Esophagus squamous epithelium (tissue), 5 donors: ENCODE measurements at regions of chr1 and their contacts with region 1.

Region 1: DNA sequence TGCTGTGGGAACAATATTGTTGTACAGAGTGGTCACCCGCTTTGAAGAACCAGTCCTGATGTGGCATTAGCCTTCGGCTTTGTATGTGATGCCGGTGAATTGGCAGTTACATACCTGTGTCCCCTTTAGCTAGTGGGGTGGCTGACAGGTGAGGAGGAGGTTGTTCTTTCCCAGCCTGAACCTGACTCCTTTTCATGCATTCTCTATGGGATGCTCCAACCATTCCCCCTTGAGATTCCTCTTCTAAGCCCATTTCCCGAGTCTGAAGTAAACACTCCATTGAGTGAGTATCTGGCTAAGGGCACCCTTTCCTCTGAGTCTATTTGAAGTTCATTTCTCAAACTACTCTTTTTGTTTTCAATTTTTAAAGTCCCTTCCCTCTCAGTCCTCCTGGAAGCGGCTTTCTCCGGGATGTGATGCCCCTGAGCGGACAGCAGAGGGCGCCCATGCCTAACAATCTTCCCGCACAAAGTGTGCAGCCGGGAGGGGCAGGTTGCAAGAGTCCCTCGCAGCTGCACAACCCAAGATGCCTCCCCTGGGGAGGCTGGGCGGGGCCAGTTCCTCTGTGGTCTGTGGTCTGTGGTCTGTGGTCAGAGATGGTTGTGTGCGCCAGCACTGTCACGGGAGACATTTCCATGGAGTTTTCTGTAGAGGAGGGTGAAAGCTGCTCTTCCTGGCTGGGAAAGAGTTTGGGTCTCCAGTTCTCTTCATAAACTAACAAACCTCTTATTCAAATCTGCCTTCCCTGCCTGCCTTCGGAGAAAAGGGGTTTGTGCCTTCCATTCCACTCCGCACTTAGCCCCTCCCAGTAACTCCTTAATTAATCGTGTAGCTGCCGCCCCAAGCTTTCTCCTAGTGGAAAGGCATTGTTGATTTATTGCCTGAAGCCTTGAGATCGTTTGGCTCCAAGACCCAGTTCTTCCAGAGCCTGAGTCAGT is 36.4 kb upstream of the LMX1A start:
- DNase-seq: peak; percentile 50
- H3K4me3 ChIP-seq: peak overlapping the region in 3 of 4 donors; percentile 24 to 46 (median 30)
- H3K27ac ChIP-seq: peak overlapping the region in 3 of 4 donors; percentile 3 to 35 (median 15)
- H3K4me1 ChIP-seq: peaks cover 3 to 34% (median 8%) of the 10 kb centered on the region in 3 donors
- H3K27me3 ChIP-seq: peaks cover 0 to 54% (median 0%) of the 10 kb centered on the region in 4 donors
- CTCF ChIP-seq: peak; percentile 83 to 93 (median 88)
- POLR2A ChIP-seq: no peak

Region 2: GRCh38 chr1:165592945-165593823 is 200.3 kb after region 1 on chr1:
- intact Hi-C with region 1: loop called (anchors 2 kb)
- DNase-seq: no peak
- H3K4me3 ChIP-seq: no peak overlapping the region
- H3K27ac ChIP-seq: no peak overlapping the region
- H3K4me1 ChIP-seq: peaks cover 5 to 20% (median 8%) of the 10 kb centered on the region in 3 donors
- H3K27me3 ChIP-seq: peaks cover 0 to 43% (median 0%) of the 10 kb centered on the region in 4 donors
- CTCF ChIP-seq: peak; percentile 73 to 97 (median 94)
- POLR2A ChIP-seq: no peak